ENCODE measurements at regions of chr12 and their contacts with region 1.

Region 1: GRCh38 chr12:103877934-103878510 is 37.0 kb upstream of the NT5DC3 start:
- DNase-seq: peak; percentile 53
- H3K4me3 Mint-ChIP-seq: no peak overlapping the region
- H3K27ac Mint-ChIP-seq: no peak overlapping the region
- H3K4me1 Mint-ChIP-seq: peaks cover 36% of the 10 kb centered on the region
- H3K27me3 Mint-ChIP-seq: peaks cover 10% of the 10 kb centered on the region

Region 2: GRCh38 chr12:103840876-103841689 is 36.9 kb before region 1 on chr12 and contains the start of gene NT5DC3:
- intact Hi-C with region 1: loop called (anchors 2 kb)
- DNase-seq: peak; percentile 75
- H3K4me3 Mint-ChIP-seq: peak within 1 kb of the TSS; percentile 90
- H3K27ac Mint-ChIP-seq: peak within 1 kb of the TSS; percentile 83
- H3K4me1 Mint-ChIP-seq: peaks cover 24% of the 10 kb centered on the region
- H3K27me3 Mint-ChIP-seq: peaks cover 24% of the 10 kb centered on the region
- total RNA-seq, gene NT5DC3: 13.2 and 14.2 TPM in 2 replicates

Region 3: GRCh38 chr12:103852498-103852997 is 25.5 kb before region 1 on chr12:
- intact Hi-C with region 1: no loop called
- DNase-seq: no peak
- H3K4me3 Mint-ChIP-seq: no peak overlapping the region
- H3K27ac Mint-ChIP-seq: no peak overlapping the region
- H3K4me1 Mint-ChIP-seq: peaks cover 7% of the 10 kb centered on the region
- H3K27me3 Mint-ChIP-seq: peaks cover 9% of the 10 kb centered on the region

Region 4: DNA sequence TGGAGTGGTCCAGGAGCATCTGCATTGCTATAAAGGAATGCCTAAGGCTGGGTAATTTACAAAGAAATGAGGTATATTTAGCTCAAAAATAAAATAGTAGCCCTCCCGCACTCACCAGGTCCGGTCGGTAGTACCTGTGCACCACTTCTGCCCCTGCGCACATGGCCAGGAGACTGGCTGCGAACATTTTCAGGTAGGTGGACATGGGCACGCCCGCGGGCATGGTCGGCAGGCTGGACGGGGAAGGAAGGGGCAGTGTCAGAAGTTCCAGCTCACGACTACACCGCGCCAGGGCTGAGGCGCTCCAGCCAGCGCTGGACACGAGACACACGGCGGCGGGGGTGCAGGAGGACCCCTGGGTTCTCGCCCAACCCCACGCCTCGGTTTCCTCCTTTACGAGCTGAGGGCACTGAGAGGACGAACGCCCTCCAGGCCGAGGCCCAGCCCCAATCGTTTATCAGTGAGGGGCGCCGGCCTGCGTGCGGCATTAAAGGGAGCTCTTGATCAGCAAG is 78.5 kb after region 1 on chr12:
- intact Hi-C with region 1: loop called (anchors 2 kb)
- DNase-seq: peak; percentile 3
- H3K4me3 Mint-ChIP-seq: peak overlapping the region; percentile 100
- H3K27ac Mint-ChIP-seq: peak overlapping the region; percentile 100
- H3K4me1 Mint-ChIP-seq: peaks cover 61% of the 10 kb centered on the region
- H3K27me3 Mint-ChIP-seq: no peaks in the 10 kb centered on the region

Region 5: GRCh38 chr12:104064031-104064822 is 186.2 kb after region 1 on chr12 and contains the start of gene HCFC2:
- intact Hi-C with region 1: loop called (anchors 5 kb)
- DNase-seq: peak; percentile 88
- H3K4me3 Mint-ChIP-seq: peak within 1 kb of the TSS; percentile 95
- H3K27ac Mint-ChIP-seq: peak within 1 kb of the TSS; percentile 86
- H3K4me1 Mint-ChIP-seq: peaks cover 36% of the 10 kb centered on the region
- H3K27me3 Mint-ChIP-seq: peaks cover 24% of the 10 kb centered on the region
- total RNA-seq, gene HCFC2: 8.5 and 8.9 TPM in 2 replicates

Measured in activated T-helper 1 cell treated with anti-CD3 and anti-CD28 coated beads, Interleukin-12 subunit alpha, Interleukin-12 subunit beta, Interleukin-2, Interleukin-4 antibody, amounts not matched to agents 30 ng/mL and 10 ng/mL and 1 ng/mL, durations not matched to agents 14 hours and 24 hours and 36 hours (primary cell).